CD4-positive, alpha-beta T cell (primary cell): ENCODE measurements at regions of chr6 and their contacts with region 1.

Region 1: GRCh38 chr6:30212865-30213666 is at the start of gene TRIM26:
- DNase-seq: peak; percentile 92 to 99 (median 95)
- ATAC-seq: peak; percentile 86
- H3K4me3 ChIP-seq: peak within 1 kb of the TSS; percentile 90
- H3K4me3 Mint-ChIP-seq: peak within 1 kb of the TSS; percentile 96
- H3K27ac ChIP-seq: peak within 1 kb of the TSS; percentile 98 to 99
- H3K27ac Mint-ChIP-seq: peak within 1 kb of the TSS; percentile 100
- H3K4me1 ChIP-seq: peaks cover 39% of the 10 kb centered on the region
- H3K4me1 Mint-ChIP-seq: peaks cover 55% of the 10 kb centered on the region
- H3K27me3 ChIP-seq: no peaks in the 10 kb centered on the region
- H3K27me3 Mint-ChIP-seq: no peaks in the 10 kb centered on the region
- CTCF ChIP-seq: no peak
- total RNA-seq, gene TRIM26: 42.1 to 44.1 TPM

Region 2: DNA sequence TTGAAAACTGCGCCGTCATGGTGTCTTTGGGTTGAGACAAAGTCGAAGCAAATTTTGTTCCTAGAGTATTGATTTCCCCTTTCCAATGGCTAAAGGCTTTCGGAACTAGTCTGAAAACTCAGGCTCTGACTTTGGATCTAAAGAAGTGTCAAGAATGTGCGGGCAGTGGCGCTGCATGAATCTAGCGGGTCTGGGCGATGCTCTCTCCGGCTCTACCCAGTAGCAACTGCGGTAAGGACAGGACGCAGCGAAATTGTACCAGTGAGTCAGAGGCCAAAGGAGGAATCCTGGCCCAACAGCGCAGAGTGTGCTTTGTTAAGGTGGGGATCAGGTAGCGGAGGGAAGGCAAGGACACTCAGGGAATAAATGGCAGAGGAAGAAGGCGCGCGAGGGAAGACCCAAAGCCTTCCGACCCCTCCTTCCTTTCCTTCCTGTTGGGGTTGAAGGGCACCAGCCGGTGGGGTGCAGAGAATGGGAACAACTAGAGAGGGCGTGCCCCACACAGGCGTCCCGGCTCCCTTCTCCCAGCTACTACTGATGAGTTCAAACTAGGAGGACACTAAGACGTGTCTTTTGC is 457.7 kb before region 1 on chr6:
- CTCF ChIA-PET with region 1: no interaction called
- POLR2A ChIA-PET with region 1: no interaction called
- intact Hi-C with region 1: no loop called
- DNase-seq: no peak
- ATAC-seq: no peak
- H3K4me3 ChIP-seq: no peak overlapping the region
- H3K4me3 Mint-ChIP-seq: no peak overlapping the region
- H3K27ac ChIP-seq: no peak overlapping the region
- H3K27ac Mint-ChIP-seq: no peak overlapping the region
- H3K4me1 ChIP-seq: peaks cover 10% of the 10 kb centered on the region
- H3K4me1 Mint-ChIP-seq: peaks cover 28% of the 10 kb centered on the region
- H3K27me3 ChIP-seq: no peaks in the 10 kb centered on the region
- H3K27me3 Mint-ChIP-seq: no peaks in the 10 kb centered on the region
- CTCF ChIP-seq: no peak

Region 3: GRCh38 chr6:30066577-30067459 is 146.2 kb before region 1 on chr6 and contains the start of gene PPP1R11:
- CTCF ChIA-PET with region 1: no interaction called
- POLR2A ChIA-PET with region 1: interaction called, 9 read pairs
- intact Hi-C with region 1: loop called in 1 of 2 experiments (anchors 5 kb)
- DNase-seq: peak; percentile 95 to 100 (median 98)
- ATAC-seq: peak; percentile 95
- H3K4me3 ChIP-seq: peak within 1 kb of the TSS; percentile 79
- H3K4me3 Mint-ChIP-seq: peak within 1 kb of the TSS; percentile 94
- H3K27ac ChIP-seq: peak within 1 kb of the TSS; percentile 83 to 96
- H3K27ac Mint-ChIP-seq: peak within 1 kb of the TSS; percentile 96
- H3K4me1 ChIP-seq: peaks cover 42% of the 10 kb centered on the region
- H3K4me1 Mint-ChIP-seq: peaks cover 69% of the 10 kb centered on the region
- H3K27me3 ChIP-seq: peaks cover 9% of the 10 kb centered on the region in 2 experiments
- H3K27me3 Mint-ChIP-seq: peaks cover 14% of the 10 kb centered on the region
- CTCF ChIP-seq: no peak
- total RNA-seq, gene PPP1R11: 28.3 to 28.6 TPM

Region 4: GRCh38 chr6:30227763-30228487 is 14.9 kb after region 1 on chr6:
- CTCF ChIA-PET with region 1: interaction called, 3 read pairs
- POLR2A ChIA-PET with region 1: interaction called, 11 read pairs
- intact Hi-C with region 1: no loop called
- DNase-seq: peak in 3 of 14 experiments; percentile 46 to 56 (median 53)
- ATAC-seq: peak; percentile 48
- H3K4me3 ChIP-seq: peak overlapping the region; percentile 1
- H3K4me3 Mint-ChIP-seq: peak overlapping the region; percentile 12
- H3K27ac ChIP-seq: no peak overlapping the region
- H3K27ac Mint-ChIP-seq: no peak overlapping the region
- H3K4me1 ChIP-seq: peaks cover 6% of the 10 kb centered on the region
- H3K4me1 Mint-ChIP-seq: no peaks in the 10 kb centered on the region
- H3K27me3 ChIP-seq: no peaks in the 10 kb centered on the region
- H3K27me3 Mint-ChIP-seq: peaks cover 13% of the 10 kb centered on the region
- CTCF ChIP-seq: no peak

Region 5: GRCh38 chr6:30326526-30327260 is 113.6 kb after region 1 on chr6 and contains the start of gene TRIM39:
- CTCF ChIA-PET with region 1: no interaction called
- POLR2A ChIA-PET with region 1: interaction called, 61 read pairs
- intact Hi-C with region 1: loop called (anchors 2 to 5 kb)
- DNase-seq: peak; percentile 73 to 97 (median 87)
- ATAC-seq: peak; percentile 59
- H3K4me3 ChIP-seq: peak within 1 kb of the TSS; percentile 83
- H3K4me3 Mint-ChIP-seq: peak within 1 kb of the TSS; percentile 97
- H3K27ac ChIP-seq: peak within 1 kb of the TSS; percentile 98 to 99
- H3K27ac Mint-ChIP-seq: peak within 1 kb of the TSS; percentile 97
- H3K4me1 ChIP-seq: peaks cover 52% of the 10 kb centered on the region
- H3K4me1 Mint-ChIP-seq: peaks cover 68% of the 10 kb centered on the region
- H3K27me3 ChIP-seq: no peaks in the 10 kb centered on the region
- H3K27me3 Mint-ChIP-seq: no peaks in the 10 kb centered on the region
- CTCF ChIP-seq: no peak
- total RNA-seq, gene TRIM39: 38.2 to 38.3 TPM

Region 6: GRCh38 chr6:30571075-30571768 is 358.2 kb after region 1 on chr6 and contains the start of gene ABCF1:
- CTCF ChIA-PET with region 1: no interaction called
- POLR2A ChIA-PET with region 1: interaction called, 3 read pairs
- intact Hi-C with region 1: loop called in 1 of 2 experiments (anchors 10 kb)
- DNase-seq: peak; percentile 97 to 100 (median 99)
- ATAC-seq: peak; percentile 90
- H3K4me3 ChIP-seq: peak within 1 kb of the TSS; percentile 82
- H3K4me3 Mint-ChIP-seq: peak within 1 kb of the TSS; percentile 100
- H3K27ac ChIP-seq: peak within 1 kb of the TSS; percentile 94 to 98
- H3K27ac Mint-ChIP-seq: peak within 1 kb of the TSS; percentile 98
- H3K4me1 ChIP-seq: peaks cover 47% of the 10 kb centered on the region
- H3K4me1 Mint-ChIP-seq: peaks cover 56% of the 10 kb centered on the region
- H3K27me3 ChIP-seq: no peaks in the 10 kb centered on the region
- H3K27me3 Mint-ChIP-seq: no peaks in the 10 kb centered on the region
- CTCF ChIP-seq: no peak
- total RNA-seq, gene ABCF1: 86.1 to 88.0 TPM